HEK293 (cell line): ENCODE measurements at regions of chr16 and their contacts with region 1.

Region 1: DNA sequence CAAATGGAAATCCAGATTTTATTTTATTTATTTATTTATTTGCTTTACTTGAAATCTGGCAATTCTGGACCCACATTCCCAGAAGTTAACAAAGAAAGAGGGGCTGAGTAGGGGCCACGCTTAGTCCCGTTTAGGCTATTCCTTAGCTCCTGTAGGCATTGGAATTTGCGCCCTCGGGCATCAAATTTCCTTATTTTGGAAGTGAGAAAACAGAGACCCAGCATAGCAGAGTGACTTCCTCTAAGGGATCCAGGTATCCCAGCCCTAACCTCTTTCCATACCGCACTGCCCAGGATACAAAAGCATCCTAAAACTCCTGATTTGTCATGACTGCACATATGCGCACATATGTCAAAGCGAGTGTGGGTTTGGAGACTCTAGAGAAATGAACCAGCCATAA is 19.0 kb upstream of the SMG1 start:
- H3K4me3 ChIP-seq: no peak overlapping the region
- H3K27ac ChIP-seq: no peak overlapping the region
- H3K4me1 ChIP-seq: 0 out of 2 replicates have a peak, but pooled peaks cover 2% of the 10 kb centered on the region
- CTCF ChIP-seq: no peak

Region 2: GRCh38 chr16:18932243-18932981 is 12.8 kb before region 1 on chr16:
- CTCF ChIA-PET with region 1: interaction called, 10 read pairs
- POLR2A ChIA-PET with region 1: interaction called, 3 read pairs
- H3K4me3 ChIP-seq: no peak overlapping the region
- H3K27ac ChIP-seq: no peak overlapping the region
- H3K4me1 ChIP-seq: no peaks in the 10 kb centered on the region
- CTCF ChIP-seq: no peak

Region 3: DNA sequence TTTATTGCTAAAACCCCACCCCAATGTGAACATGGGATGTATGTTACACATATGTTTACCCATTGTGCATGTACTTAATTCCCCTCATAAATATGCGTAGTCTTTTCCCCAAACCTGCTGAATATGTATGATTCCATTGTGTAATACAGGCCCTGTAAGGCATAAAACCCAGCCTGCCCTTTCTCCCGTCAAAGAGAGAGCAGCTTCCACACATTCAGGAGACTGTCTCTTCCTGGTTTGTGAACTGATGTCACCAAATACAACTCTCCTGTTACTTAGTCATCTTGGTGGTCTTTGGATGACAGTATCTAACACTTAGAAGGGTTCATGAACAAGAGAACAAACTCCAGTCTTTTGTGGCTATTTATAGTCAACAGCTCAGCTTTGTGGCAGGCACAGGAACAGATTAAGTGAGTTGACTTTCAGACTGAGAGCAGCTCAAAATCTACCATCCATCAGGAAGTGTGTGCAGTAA is 13.8 kb after region 1 on chr16:
- CTCF ChIA-PET with region 1: interaction called, 10 read pairs
- POLR2A ChIA-PET with region 1: no interaction called
- H3K4me3 ChIP-seq: no peak overlapping the region
- H3K27ac ChIP-seq: no peak overlapping the region
- H3K4me1 ChIP-seq: peaks cover 6% of the 10 kb centered on the region; the same call in 1 of the 2 replicates
- CTCF ChIP-seq: no peak

Region 4: GRCh38 chr16:19113453-19114351 is 168.5 kb after region 1 on chr16 and contains the start of gene ITPRIPL2:
- CTCF ChIA-PET with region 1: no interaction called
- POLR2A ChIA-PET with region 1: no interaction called
- H3K4me3 ChIP-seq: peak within 1 kb of the TSS; percentile 69
- H3K27ac ChIP-seq: peak within 1 kb of the TSS; percentile 82
- H3K4me1 ChIP-seq: peaks cover 2% of the 10 kb centered on the region; the same call in 1 of the 2 replicates
- CTCF ChIP-seq: 0 out of 2 replicates have a peak, but pooled peaks have one; percentile 32

Region 5: GRCh38 chr16:19210280-19210924 is 265.2 kb after region 1 on chr16:
- CTCF ChIA-PET with region 1: no interaction called
- POLR2A ChIA-PET with region 1: no interaction called
- H3K4me3 ChIP-seq: no peak overlapping the region
- H3K27ac ChIP-seq: no peak overlapping the region
- H3K4me1 ChIP-seq: no peaks in the 10 kb centered on the region
- CTCF ChIP-seq: no peak